ENCODE measurements at regions of chr6 and their contacts with region 1.

Region 1: GRCh38 chr6:150004783-150005717 is 20.3 kb downstream of the RAET1L start:
- DNase-seq: peak; percentile 93 to 96 (median 94)
- ATAC-seq: peak; percentile 98 to 100 (median 99)
- H3K4me3 ChIP-seq: peak overlapping the region; percentile 40 to 84 (median 64)
- H3K27ac ChIP-seq: peak overlapping the region in 3 of 12 donors; percentile 31 to 54 (median 42)
- H3K4me1 ChIP-seq: peaks cover 0 to 16% (median 8%) of the 10 kb centered on the region in 12 donors
- H3K27me3 ChIP-seq: peaks cover 0 to 70% (median 23%) of the 10 kb centered on the region in 9 donors
- CTCF ChIP-seq: no peak
- POLR2A ChIP-seq: no peak

Region 2: DNA sequence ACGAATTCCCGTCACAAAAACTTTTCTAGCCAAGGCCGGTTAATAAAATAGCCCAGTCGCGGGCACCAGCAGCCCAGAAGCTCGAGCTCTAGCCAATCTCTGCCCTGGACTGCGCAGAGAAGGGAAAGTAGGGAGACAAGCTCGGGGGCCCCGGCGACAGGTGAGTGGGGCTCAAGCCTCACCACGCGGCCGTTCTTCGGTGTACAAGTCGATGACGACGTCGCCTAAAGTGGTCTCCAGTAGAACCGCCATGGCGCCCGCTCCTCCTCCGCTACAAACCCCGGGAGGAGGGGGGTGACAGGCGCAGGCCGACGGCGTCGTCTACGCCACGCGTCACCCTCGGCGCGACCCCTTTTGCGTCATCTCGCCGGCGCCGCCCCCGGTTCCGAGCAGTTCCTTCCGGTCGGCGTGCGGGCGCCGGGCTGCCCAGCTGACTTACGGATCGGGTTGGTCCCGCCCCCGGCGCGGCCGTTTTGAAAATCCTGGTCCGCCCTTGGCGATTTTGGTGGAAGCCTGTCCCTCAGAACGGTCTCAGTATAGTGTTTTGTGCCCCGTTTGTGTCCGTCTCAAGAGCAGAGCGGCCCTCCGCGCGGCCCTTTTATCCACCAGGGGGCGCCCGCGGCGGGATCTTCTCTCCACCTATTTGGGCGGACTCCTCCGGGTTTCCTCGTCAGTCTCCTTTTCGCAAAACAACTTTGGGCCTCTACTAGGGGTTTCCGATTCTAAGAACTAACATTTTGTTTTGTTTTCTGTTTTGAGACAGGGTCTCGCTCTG is 459.1 kb before region 1 on chr6 and contains the start of gene PPIL4:
- intact Hi-C with region 1: loop called in 1 of 10 experiments (anchors 5 kb)
- DNase-seq: peak; percentile 96 to 99 (median 98)
- ATAC-seq: peak; percentile 97 to 99 (median 98)
- H3K4me3 ChIP-seq: peak within 1 kb of the TSS; percentile 54 to 99 (median 92)
- H3K27ac ChIP-seq: peak within 1 kb of the TSS; percentile 90 to 99 (median 94)
- H3K4me1 ChIP-seq: peaks cover 4 to 37% (median 29%) of the 10 kb centered on the region in 12 donors
- H3K27me3 ChIP-seq: no peaks in the 10 kb centered on the region
- CTCF ChIP-seq: peak; percentile 76 to 95 (median 83)
- POLR2A ChIP-seq: peak; percentile 51 to 91
- total RNA-seq, gene PPIL4: 10.9 to 22.9 (median 16.9) TPM

Region 3: GRCh38 chr6:149963462-149964307 is 41.4 kb before region 1 on chr6 and contains the start of gene ULBP1:
- intact Hi-C with region 1: loop called in 3 of 10 experiments (anchors 2 to 10 kb)
- DNase-seq: peak; percentile 87 to 91 (median 89)
- ATAC-seq: peak; percentile 86 to 98 (median 96)
- H3K4me3 ChIP-seq: peak within 1 kb of the TSS; percentile 19 to 68 (median 54)
- H3K27ac ChIP-seq: peak within 1 kb of the TSS in 3 of 12 donors; percentile 3 to 35 (median 9)
- H3K4me1 ChIP-seq: peaks cover 0 to 28% (median 14%) of the 10 kb centered on the region in 12 donors
- H3K27me3 ChIP-seq: peaks cover 14 to 80% (median 37%) of the 10 kb centered on the region in 9 donors
- CTCF ChIP-seq: peak in 1 of 12 donors; percentile 8
- POLR2A ChIP-seq: peak in 1 of 2 donors; percentile 59
- total RNA-seq, gene ULBP1: 0.10 to 0.52 (median 0.25) TPM